ENCODE measurements at regions of chr6 and their contacts with region 1.

Region 1: DNA sequence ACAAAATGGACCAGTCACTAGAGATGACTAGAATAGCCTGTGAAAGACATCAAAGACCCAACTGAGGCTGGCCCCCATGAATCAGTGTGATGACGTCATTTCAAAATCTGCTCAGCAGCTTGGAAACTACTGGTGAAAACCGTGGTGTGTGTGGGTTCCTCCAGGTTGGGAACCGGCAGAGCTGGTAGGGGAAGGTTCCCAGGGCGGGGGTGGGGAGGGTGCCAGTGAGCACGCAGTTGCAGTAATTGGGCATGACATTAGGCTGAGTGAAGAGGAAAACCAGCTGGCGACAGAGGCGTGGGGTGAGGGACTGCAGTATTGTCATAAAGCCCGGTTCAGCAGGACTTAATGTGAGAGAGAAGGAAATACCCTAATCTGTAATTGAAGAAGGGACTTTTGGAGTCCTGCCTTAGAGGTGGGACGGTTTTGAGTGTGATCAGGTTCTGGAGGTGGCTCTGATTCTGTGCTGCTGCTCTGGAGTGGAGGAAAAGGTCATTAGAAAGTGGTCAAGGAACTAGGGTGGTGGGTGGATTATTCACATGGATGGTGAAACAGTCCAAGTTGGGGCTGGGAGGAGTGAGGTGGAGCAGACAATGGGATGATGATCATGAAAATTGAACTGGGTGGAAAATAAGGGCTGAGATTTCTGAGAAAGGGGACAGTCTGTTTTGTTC is 52.0 kb upstream of the MTHFD1L start:
- DNase-seq: peak; percentile 9
- H3K4me3 Mint-ChIP-seq: peak overlapping the region; percentile 45
- H3K27ac Mint-ChIP-seq: peak overlapping the region; percentile 66
- H3K4me1 Mint-ChIP-seq: peaks cover 28% of the 10 kb centered on the region
- H3K27me3 Mint-ChIP-seq: no peaks in the 10 kb centered on the region
- CTCF ChIP-seq: no peak

Region 2: GRCh38 chr6:150334790-150335783 is 478.4 kb before region 1 on chr6:
- CTCF ChIA-PET with region 1: no interaction called
- intact Hi-C with region 1: loop called (anchors 1 kb)
- DNase-seq: peak; percentile 46
- H3K4me3 Mint-ChIP-seq: no peak overlapping the region
- H3K27ac Mint-ChIP-seq: no peak overlapping the region
- H3K4me1 Mint-ChIP-seq: peaks cover 19% of the 10 kb centered on the region
- H3K27me3 Mint-ChIP-seq: no peaks in the 10 kb centered on the region
- CTCF ChIP-seq: peak; percentile 47

Region 3: DNA sequence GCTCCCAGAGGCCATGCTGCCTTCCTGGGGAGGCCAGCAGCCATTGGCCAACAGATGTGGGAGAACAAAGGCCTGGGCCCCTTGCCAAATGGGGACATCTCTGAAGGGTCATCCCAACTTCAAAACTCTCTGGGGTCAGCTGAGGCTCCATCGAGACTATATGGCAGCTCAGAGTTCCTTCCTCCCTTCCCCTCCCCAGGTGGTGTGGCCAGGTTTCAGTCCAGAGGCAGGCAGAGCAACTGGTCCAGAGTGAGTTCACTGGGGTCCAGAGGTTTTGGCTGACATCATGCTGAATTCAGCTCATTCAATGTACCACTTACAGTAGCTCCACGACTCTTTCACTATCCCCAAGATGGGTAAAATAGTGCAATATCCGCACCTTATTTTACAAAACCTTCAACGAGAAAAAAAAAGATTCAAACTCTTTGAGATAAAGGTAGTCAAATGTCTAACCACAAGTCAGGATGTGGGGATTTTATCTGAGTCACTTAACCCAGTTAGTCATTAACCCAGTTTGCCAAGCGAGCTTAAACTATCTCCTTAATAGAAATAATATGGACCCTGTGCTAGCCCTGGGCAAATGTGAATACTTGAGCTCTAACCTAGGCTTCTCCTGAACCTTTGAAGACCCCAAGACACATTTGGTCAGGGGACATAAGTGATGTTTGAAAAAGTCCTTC is 322.2 kb before region 1 on chr6:
- CTCF ChIA-PET with region 1: interaction called, 7 read pairs
- intact Hi-C with region 1: loop called (anchors 5 kb)
- DNase-seq: peak; percentile 30
- H3K4me3 Mint-ChIP-seq: peak overlapping the region; percentile 30
- H3K27ac Mint-ChIP-seq: peak overlapping the region; percentile 79
- H3K4me1 Mint-ChIP-seq: peaks cover 18% of the 10 kb centered on the region
- H3K27me3 Mint-ChIP-seq: no peaks in the 10 kb centered on the region
- CTCF ChIP-seq: no peak

Region 4: GRCh38 chr6:150667977-150668716 is 145.3 kb before region 1 on chr6:
- CTCF ChIA-PET with region 1: no interaction called
- intact Hi-C with region 1: loop called (anchors 10 kb)
- DNase-seq: peak; percentile 86
- H3K4me3 Mint-ChIP-seq: no peak overlapping the region
- H3K27ac Mint-ChIP-seq: peak overlapping the region; percentile 81
- H3K4me1 Mint-ChIP-seq: no peaks in the 10 kb centered on the region
- H3K27me3 Mint-ChIP-seq: no peaks in the 10 kb centered on the region
- CTCF ChIP-seq: no peak

Region 5: GRCh38 chr6:150876598-150876997 is 63.1 kb after region 1 on chr6:
- CTCF ChIA-PET with region 1: interaction called, 10 read pairs
- intact Hi-C with region 1: loop called (anchors 5 kb)
- DNase-seq: no peak
- H3K4me3 Mint-ChIP-seq: no peak overlapping the region
- H3K27ac Mint-ChIP-seq: no peak overlapping the region
- H3K4me1 Mint-ChIP-seq: peaks cover 23% of the 10 kb centered on the region
- H3K27me3 Mint-ChIP-seq: no peaks in the 10 kb centered on the region
- CTCF ChIP-seq: no peak